CD4-positive, alpha-beta memory T cell (primary cell): ENCODE measurements at regions of chr4 and their contacts with region 1.

Region 1: DNA sequence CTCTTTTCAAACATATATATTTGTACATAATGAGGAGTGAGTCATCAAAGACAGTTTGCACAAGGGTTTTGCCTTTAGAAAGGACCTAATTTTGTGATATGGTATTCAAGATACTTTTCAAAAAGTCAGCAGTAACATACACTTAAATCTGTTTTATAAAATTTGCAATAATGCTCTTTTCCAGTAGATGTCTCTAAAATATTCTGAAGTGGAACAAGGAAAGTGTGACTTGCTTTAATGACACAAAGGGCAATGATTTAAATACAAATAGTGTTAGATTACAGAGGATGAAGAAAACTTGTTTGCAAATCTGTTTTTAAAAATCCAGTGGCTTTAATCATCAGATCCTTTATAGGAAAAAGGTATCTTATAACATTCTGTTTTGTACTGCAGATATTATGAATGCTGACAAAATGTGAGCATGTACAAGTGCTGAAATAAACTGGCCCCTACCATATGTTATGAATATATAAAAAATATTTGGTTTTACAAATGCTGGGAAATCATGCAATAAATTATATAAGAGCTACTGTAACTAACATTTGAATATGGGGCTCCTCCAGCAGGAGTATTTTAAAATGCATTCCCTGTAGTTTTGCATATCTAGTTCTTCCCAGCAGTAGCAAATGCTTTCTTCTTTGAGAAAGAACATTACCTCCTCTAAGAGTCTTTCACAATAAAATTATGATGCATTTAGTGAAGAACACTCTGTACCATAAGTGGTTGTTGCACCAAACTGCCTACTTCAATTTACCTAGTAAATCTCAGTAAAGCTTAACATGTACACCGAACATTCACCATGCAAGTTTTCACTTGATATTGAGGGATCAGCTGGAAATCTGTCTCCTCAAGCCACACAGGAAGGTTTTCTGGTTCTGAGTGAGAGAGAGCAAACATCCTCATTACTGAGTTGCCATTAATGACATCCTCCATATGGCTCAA is 20.2 kb downstream of the MMRN1 start:
- DNase-seq: no peak
- H3K4me3 ChIP-seq: no peak overlapping the region
- H3K4me3 Mint-ChIP-seq: no peak overlapping the region
- H3K27ac ChIP-seq: no peak overlapping the region
- H3K27ac Mint-ChIP-seq: no peak overlapping the region
- H3K4me1 ChIP-seq: no peaks in the 10 kb centered on the region
- H3K4me1 Mint-ChIP-seq: peaks cover 0 to 3% (median under 1%) of the 10 kb centered on the region in 4 donors
- H3K27me3 ChIP-seq: no peaks in the 10 kb centered on the region
- H3K27me3 Mint-ChIP-seq: no peaks in the 10 kb centered on the region

Region 2: GRCh38 chr4:89617317-89617716 is 297.6 kb before region 1 on chr4:
- CTCF ChIA-PET with region 1: no interaction called
- POLR2A ChIA-PET with region 1: no interaction called
- intact Hi-C with region 1: no loop called
- DNase-seq: no peak
- H3K4me3 ChIP-seq: no peak overlapping the region
- H3K4me3 Mint-ChIP-seq: no peak overlapping the region
- H3K27ac ChIP-seq: no peak overlapping the region
- H3K27ac Mint-ChIP-seq: no peak overlapping the region
- H3K4me1 ChIP-seq: peaks cover 8% of the 10 kb centered on the region
- H3K4me1 Mint-ChIP-seq: peaks cover 2 to 17% (median 10%) of the 10 kb centered on the region in 4 donors
- H3K27me3 ChIP-seq: no peaks in the 10 kb centered on the region
- H3K27me3 Mint-ChIP-seq: no peaks in the 10 kb centered on the region

Region 3: DNA sequence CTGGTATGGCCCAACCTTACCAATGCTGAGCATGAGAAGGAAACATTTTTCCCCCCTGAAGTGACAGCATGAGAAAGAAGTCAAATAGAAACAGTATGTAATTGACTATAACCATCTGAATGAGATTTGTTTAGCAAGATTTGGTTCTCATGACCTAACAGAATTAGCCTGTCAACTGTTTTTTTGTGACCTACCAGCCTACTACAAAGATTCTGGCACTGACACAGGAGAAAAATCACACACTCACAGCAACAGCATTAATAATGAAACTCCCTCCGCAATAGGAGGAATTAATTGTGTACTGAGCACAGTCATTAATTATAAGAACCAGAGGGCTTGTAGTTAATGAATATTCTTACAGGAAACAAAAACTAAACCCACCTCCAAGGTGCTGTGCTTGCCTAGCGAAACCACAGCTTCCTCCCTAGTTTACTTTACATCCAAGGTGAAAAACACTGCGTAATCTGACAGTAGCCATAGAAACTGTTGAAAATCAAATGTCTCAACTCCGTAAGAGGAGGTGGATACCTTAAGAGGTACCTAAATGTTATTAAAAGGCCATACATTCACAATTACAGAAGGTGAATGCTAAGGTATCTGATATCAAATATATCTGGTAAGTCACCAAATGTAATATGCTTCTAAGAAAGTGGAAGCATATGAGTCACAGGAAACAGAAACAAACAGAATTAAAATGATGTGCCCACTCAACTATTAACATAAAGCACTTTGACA is 14.7 kb after region 1 on chr4:
- CTCF ChIA-PET with region 1: interaction called, 5 read pairs
- POLR2A ChIA-PET with region 1: no interaction called
- intact Hi-C with region 1: loop called (anchors 2 kb)
- DNase-seq: peak; percentile 50 to 77 (median 72)
- H3K4me3 ChIP-seq: peak overlapping the region in 1 of 2 donors; percentile 9
- H3K4me3 Mint-ChIP-seq: peak overlapping the region; percentile 52 to 89 (median 78)
- H3K27ac ChIP-seq: peak overlapping the region; percentile 34
- H3K27ac Mint-ChIP-seq: peak overlapping the region; percentile 75 to 97 (median 95)
- H3K4me1 ChIP-seq: peaks cover 21% of the 10 kb centered on the region
- H3K4me1 Mint-ChIP-seq: peaks cover 11 to 19% (median 17%) of the 10 kb centered on the region in 4 donors
- H3K27me3 ChIP-seq: no peaks in the 10 kb centered on the region
- H3K27me3 Mint-ChIP-seq: no peaks in the 10 kb centered on the region

Region 4: DNA sequence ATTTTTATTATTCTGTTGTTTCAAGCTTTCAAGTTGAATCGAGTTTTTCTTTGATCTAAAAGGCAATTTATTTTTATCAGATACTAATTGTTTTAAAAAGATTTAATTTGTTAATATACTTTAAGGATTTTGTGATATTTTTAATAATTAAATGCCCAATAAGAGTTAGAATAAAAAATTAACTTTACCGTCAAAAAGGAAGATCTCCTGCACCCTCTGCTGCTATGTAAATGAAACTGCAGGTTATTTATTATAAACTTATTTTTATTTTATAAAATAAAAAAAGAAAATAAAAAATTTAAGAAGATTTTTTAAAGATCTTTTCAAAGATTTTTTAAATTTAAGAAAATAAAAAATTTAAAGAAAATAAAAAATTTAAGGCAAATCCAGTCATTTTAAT is 378.4 kb after region 1 on chr4:
- CTCF ChIA-PET with region 1: no interaction called
- POLR2A ChIA-PET with region 1: no interaction called
- intact Hi-C with region 1: loop called (anchors 2 kb)
- DNase-seq: no peak
- H3K4me3 ChIP-seq: no peak overlapping the region
- H3K4me3 Mint-ChIP-seq: no peak overlapping the region
- H3K27ac ChIP-seq: no peak overlapping the region
- H3K27ac Mint-ChIP-seq: no peak overlapping the region
- H3K4me1 ChIP-seq: no peaks in the 10 kb centered on the region
- H3K4me1 Mint-ChIP-seq: no peaks in the 10 kb centered on the region
- H3K27me3 ChIP-seq: no peaks in the 10 kb centered on the region
- H3K27me3 Mint-ChIP-seq: peaks cover 0 to 3% of the 10 kb centered on the region in 2 donors